ENCODE measurements at regions of chr9 and their contacts with region 1.

Region 1: GRCh38 chr9:124537926-124538325 is 30.7 kb upstream of the NR5A1 start:
- DNase-seq: no peak

Region 2: GRCh38 chr9:123702483-123702882 is 835.4 kb before region 1 on chr9:
- intact Hi-C with region 1: no loop called
- DNase-seq: no peak

Region 3: GRCh38 chr9:124126571-124127289 is 411.2 kb before region 1 on chr9:
- intact Hi-C with region 1: loop called (anchors 2 kb)
- DNase-seq: peak; percentile 90

Region 4: DNA sequence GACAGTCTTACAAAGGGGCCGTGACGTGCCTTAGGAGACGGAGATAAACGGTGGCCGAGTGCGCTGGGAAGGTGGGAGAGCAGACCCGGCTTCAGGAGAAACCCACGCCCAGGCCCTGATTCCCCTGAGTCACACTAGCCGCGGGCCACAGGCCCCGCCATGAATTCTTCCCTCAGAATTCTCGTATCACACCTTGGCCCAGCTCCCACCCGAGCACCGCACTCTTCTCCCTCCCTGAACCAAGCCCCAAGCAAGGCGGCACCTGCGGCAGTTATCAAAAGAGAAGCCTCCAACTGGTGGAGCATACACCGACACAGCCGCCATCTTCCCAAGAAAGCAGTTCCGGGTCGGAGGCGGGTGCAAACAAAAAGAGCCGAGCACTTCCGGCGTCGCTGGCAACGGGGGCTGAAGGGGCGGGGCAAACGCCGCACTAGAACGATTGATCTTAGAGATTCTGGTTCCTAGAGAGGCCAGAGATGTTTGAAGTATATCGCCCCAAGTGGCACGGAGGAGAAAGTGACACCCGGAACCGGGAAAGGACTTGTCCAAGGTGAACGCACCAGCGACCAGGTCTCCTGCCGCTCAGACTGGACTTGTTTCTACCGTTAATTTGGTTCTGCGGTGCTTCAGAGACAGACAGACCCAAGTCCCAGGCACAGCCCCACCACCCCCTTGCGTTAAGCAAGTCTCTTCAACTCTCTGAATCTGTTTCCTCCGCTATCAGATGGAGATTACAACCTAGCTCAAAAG is 122.6 kb before region 1 on chr9 and contains the start of gene PSMB7:
- intact Hi-C with region 1: loop called (anchors 5 kb)
- DNase-seq: peak; percentile 97
- total RNA-seq, gene PSMB7: 133 TPM